Activated CD8-positive, alpha-beta T cell treated with anti-CD3 and anti-CD28 coated beads, Interleukin-2, amount 10 ng/mL, durations not matched to agents 7 days and 5 days (primary cell): ENCODE measurements at regions of chr19 and their contacts with region 1.

Region 1: DNA sequence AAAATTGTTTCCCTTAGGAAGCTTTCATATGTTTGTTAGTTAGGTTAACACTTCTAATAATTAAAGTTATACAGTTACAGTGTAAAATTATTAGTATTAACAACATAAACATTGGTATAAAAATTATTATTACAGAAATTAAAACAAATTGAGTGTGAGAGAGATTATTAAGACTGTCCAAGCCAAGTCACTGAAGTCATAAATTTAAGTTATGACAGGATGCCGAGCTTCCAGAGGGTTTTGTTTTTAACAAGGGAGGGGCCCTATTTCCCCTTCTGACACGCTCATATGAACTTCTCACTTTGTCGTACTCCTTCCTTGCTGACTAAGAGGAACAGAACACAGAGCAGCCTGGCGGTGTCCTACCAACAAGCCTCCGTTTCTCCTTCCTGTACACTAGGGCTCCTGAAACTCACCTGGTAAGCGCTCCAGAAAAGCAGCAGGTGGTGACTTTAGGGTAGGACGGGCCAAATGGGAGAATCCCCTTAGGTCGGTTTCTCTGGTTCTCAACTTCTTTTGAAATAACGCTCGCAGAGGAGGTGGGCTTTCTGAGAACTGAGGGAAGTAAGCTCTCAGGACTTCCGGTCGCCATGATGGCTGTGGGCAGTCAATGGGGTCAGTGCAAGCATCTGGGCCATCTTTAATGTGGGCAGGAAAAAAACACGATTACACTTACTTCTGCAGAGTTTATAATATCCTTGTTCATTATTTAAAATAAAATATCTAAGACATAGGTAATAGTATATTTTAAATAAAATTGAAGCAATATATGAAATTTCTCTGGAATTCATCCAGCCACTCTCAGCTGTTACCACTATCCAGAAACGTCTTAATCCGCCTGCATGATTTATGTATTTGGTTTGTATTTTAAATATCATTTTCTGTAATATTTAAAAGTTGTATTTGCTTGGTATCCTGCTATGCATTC is at the start of gene CARD8:
- DNase-seq: peak; percentile 92
- ATAC-seq: peak; percentile 86
- H3K4me3 Mint-ChIP-seq: peak within 1 kb of the TSS; percentile 94
- H3K27ac Mint-ChIP-seq: peak within 1 kb of the TSS; percentile 99
- H3K4me1 Mint-ChIP-seq: peaks cover 69% of the 10 kb centered on the region
- H3K27me3 Mint-ChIP-seq: no peaks in the 10 kb centered on the region
- total RNA-seq, gene CARD8: 180 to 185 TPM

Region 2: DNA sequence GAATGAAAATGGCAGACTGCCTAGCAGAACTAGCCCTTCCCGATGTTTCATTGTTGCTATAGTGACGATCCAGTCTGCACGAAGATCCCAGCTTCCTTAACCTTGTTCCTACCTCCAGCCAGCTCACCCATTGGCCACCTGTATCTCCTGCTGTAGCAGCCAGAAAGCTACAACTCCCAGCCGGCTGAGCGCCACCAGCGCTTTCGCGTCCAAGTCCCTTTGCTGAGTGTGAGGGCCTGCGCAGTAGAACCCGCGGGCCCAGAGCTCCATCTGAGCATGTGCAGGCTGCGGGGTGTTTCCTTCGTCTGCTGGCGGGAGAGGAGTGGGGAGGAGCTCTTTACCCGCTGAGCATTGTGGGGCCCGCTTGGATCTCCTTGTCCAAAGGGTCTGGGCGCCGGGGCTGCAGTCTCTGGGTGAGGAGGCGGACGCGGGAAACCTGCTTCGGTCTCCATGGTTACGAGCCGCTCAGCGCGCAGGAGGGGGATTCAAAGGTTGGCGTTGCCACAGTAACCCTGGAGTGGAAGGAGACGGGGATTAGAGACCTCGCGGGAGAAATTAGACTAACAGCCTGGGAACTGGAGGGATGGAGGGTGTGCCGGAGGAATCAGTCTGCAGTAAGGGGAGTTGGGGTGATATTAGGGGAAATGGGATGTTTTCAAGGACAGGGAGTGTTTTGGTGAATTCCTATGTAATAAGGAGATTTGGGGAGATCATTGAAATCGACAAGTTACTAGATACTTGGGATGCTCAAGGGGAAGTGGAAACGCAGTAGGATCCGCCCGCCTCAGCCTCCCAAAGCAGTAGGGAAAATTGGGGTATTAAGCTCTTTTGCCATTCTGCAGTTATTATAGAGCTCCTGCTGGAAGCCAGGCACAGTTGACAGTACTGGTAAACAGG is 51.7 kb before region 1 on chr19:
- CTCF ChIA-PET with region 1: interaction called, 27 read pairs
- POLR2A ChIA-PET with region 1: interaction called, 23 read pairs
- DNase-seq: peak; percentile 96
- ATAC-seq: peak; percentile 100
- H3K4me3 Mint-ChIP-seq: no peak overlapping the region
- H3K27ac Mint-ChIP-seq: no peak overlapping the region
- H3K4me1 Mint-ChIP-seq: peaks cover 18% of the 10 kb centered on the region
- H3K27me3 Mint-ChIP-seq: no peaks in the 10 kb centered on the region

Region 3: DNA sequence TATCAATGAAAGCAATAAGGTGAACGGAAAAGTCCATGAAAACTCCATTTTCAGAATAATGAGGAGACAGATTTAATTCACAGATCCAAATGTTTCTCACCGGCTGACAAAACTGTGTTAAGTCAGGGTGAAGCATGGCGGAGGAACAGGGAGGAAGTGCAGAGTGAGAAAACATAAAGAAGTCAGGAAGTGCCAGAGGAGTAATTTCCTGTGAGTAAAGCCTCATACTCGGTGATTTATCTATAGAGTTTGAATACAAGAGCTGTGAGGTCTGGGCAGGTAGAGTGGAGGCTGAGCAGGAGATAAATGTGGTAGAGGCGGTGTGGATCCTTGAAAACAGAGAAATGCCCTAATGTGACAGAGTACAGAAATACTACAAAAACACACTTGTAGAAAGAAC is 11.4 kb before region 1 on chr19:
- CTCF ChIA-PET with region 1: interaction called, 23 read pairs
- POLR2A ChIA-PET with region 1: interaction called, 47 read pairs
- DNase-seq: peak; percentile 60
- ATAC-seq: peak; percentile 89
- H3K4me3 Mint-ChIP-seq: peak overlapping the region; percentile 77
- H3K27ac Mint-ChIP-seq: peak overlapping the region; percentile 82
- H3K4me1 Mint-ChIP-seq: peaks cover 37% of the 10 kb centered on the region
- H3K27me3 Mint-ChIP-seq: no peaks in the 10 kb centered on the region

Region 4: GRCh38 chr19:48271531-48272151 is 16.0 kb after region 1 on chr19:
- CTCF ChIA-PET with region 1: interaction called, 12 read pairs
- POLR2A ChIA-PET with region 1: no interaction called
- DNase-seq: peak; percentile 31
- ATAC-seq: peak; percentile 59
- H3K4me3 Mint-ChIP-seq: peak overlapping the region; percentile 77
- H3K27ac Mint-ChIP-seq: peak overlapping the region; percentile 66
- H3K4me1 Mint-ChIP-seq: peaks cover 26% of the 10 kb centered on the region
- H3K27me3 Mint-ChIP-seq: peaks cover 9% of the 10 kb centered on the region